ENCODE measurements at regions of chr11 and their contacts with region 1.

Region 1: GRCh38 chr11:83836883-83837654 is 550.9 kb upstream of the CCDC90B start:
- DNase-seq: peak; percentile 77
- H3K4me3 ChIP-seq: no peak overlapping the region
- H3K27ac ChIP-seq: no peak overlapping the region
- H3K4me1 ChIP-seq: no peaks in the 10 kb centered on the region
- H3K27me3 ChIP-seq: peaks cover 34% of the 10 kb centered on the region
- CTCF ChIP-seq: peak; percentile 93

Region 2: GRCh38 chr11:83895516-83895915 is 58.4 kb after region 1 on chr11:
- CTCF ChIA-PET with region 1: no interaction called
- POLR2A ChIA-PET with region 1: no interaction called
- intact Hi-C with region 1: no loop called
- DNase-seq: peak; percentile 13
- H3K4me3 ChIP-seq: no peak overlapping the region
- H3K27ac ChIP-seq: no peak overlapping the region
- H3K4me1 ChIP-seq: no peaks in the 10 kb centered on the region
- H3K27me3 ChIP-seq: no peaks in the 10 kb centered on the region
- CTCF ChIP-seq: no peak

Region 3: GRCh38 chr11:83971063-83971462 is 134.0 kb after region 1 on chr11:
- CTCF ChIA-PET with region 1: no interaction called
- POLR2A ChIA-PET with region 1: no interaction called
- intact Hi-C with region 1: loop called (anchors 10 kb)
- DNase-seq: peak; percentile 30
- H3K4me3 ChIP-seq: no peak overlapping the region
- H3K27ac ChIP-seq: no peak overlapping the region
- H3K4me1 ChIP-seq: no peaks in the 10 kb centered on the region
- H3K27me3 ChIP-seq: no peaks in the 10 kb centered on the region
- CTCF ChIP-seq: no peak

Region 4: GRCh38 chr11:84384731-84385130 is 547.7 kb after region 1 on chr11:
- CTCF ChIA-PET with region 1: interaction called, 6 read pairs
- POLR2A ChIA-PET with region 1: no interaction called
- intact Hi-C with region 1: loop called (anchors 1 kb)
- DNase-seq: peak; percentile 64
- H3K4me3 ChIP-seq: no peak overlapping the region
- H3K27ac ChIP-seq: no peak overlapping the region
- H3K4me1 ChIP-seq: no peaks in the 10 kb centered on the region
- H3K27me3 ChIP-seq: no peaks in the 10 kb centered on the region
- CTCF ChIP-seq: peak; percentile 88

Region 5: GRCh38 chr11:84564180-84564866 is 727.3 kb after region 1 on chr11:
- CTCF ChIA-PET with region 1: no interaction called
- POLR2A ChIA-PET with region 1: no interaction called
- intact Hi-C with region 1: loop called (anchors 2 kb)
- DNase-seq: peak; percentile 60
- H3K4me3 ChIP-seq: no peak overlapping the region
- H3K27ac ChIP-seq: no peak overlapping the region
- H3K4me1 ChIP-seq: no peaks in the 10 kb centered on the region
- H3K27me3 ChIP-seq: no peaks in the 10 kb centered on the region
- CTCF ChIP-seq: peak; percentile 91